ENCODE measurements at regions of chr1 and their contacts with region 1.

Region 1: DNA sequence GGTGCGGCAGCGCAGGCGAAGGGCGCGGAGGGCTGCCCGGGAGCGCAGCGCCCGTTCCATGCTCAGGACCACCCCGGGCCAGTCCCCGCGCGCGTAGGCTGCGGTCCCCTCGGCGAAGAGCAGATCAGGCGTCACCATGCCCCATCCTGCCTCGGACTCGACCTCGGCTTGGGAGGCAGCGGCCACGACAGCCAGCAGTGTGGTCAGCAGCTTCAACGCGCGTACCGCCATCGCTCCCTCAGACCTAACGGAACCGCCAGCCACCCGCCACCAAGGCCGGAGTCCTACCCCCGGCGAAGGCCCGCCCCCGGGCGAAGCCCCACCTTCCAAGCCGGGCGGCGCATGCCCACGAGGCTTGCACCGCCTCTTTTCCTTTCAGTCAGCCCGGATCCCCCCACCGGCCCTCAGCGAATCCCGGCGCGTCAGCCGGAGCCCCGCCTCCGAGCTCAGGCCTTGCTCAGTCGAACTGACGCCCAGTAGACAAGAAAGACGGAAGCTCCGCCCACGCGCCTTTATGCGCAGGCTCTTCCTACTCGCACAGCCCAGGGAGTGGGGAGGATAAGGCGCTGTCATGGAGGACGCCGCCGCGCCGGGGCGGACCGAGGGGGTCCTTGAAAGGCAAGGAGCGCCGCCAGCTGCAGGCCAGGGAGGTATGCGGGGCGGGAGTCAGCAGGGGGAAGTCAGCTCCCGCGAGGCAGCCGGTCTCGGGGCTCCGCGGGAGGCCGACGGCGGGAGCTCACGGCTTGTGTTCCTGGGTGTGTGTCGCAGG is at the starts of genes C1orf50 and P3H1:
- DNase-seq: peak; percentile 100
- H3K4me3 Mint-ChIP-seq: no peak within 1 kb of the TSS
- H3K27ac Mint-ChIP-seq: peak within 1 kb of the TSS; percentile 83
- H3K4me1 Mint-ChIP-seq: peaks cover 35% of the 10 kb centered on the region
- H3K27me3 Mint-ChIP-seq: no peaks in the 10 kb centered on the region
- total RNA-seq, gene C1orf50: 4.1 to 4.7 TPM
- total RNA-seq, gene P3H1: 26.4 to 28.6 TPM

Region 2: GRCh38 chr1:42392967-42393848 is 373.7 kb before region 1 on chr1:
- CTCF ChIA-PET with region 1: no interaction called
- intact Hi-C with region 1: no loop called
- DNase-seq: no peak
- H3K4me3 Mint-ChIP-seq: no peak overlapping the region
- H3K27ac Mint-ChIP-seq: no peak overlapping the region
- H3K4me1 Mint-ChIP-seq: peaks cover 10% of the 10 kb centered on the region
- H3K27me3 Mint-ChIP-seq: no peaks in the 10 kb centered on the region

Region 3: GRCh38 chr1:42456010-42456758 is 310.7 kb before region 1 on chr1 and contains the starts of genes PPCS and ZMYND12:
- CTCF ChIA-PET with region 1: no interaction called
- intact Hi-C with region 1: loop called (anchors 2 kb)
- DNase-seq: peak; percentile 94
- H3K4me3 Mint-ChIP-seq: peak within 1 kb of the TSS; percentile 95
- H3K27ac Mint-ChIP-seq: peak within 1 kb of the TSS; percentile 94
- H3K4me1 Mint-ChIP-seq: peaks cover 23% of the 10 kb centered on the region
- H3K27me3 Mint-ChIP-seq: no peaks in the 10 kb centered on the region
- total RNA-seq, gene PPCS: 47.4 to 49.6 TPM
- total RNA-seq, gene ZMYND12: 0.74 to 0.76 TPM

Region 4: DNA sequence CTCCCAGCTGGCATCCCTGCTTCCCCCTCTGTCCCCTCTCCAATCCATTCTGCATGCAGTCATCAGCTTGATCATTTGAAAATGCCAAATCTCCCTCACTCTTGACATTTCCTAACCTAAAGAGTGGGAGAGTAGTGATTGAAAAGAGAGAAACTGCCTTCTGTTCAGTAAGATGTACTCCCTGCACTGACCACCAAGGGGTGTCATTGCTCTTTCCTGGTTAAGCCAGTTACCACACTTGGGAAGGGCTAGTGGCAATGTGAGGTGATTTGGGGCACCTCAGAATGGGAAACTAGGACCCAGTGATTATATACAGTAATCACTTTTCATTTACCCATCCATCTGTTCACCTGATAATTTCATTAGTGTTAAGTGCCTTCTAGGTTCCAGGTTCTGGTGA is 10.9 kb after region 1 on chr1:
- CTCF ChIA-PET with region 1: interaction called, 23 read pairs
- intact Hi-C with region 1: no loop called
- DNase-seq: peak; percentile 61
- H3K4me3 Mint-ChIP-seq: no peak overlapping the region
- H3K27ac Mint-ChIP-seq: no peak overlapping the region
- H3K4me1 Mint-ChIP-seq: peaks cover 6% of the 10 kb centered on the region
- H3K27me3 Mint-ChIP-seq: no peaks in the 10 kb centered on the region

Region 5: DNA sequence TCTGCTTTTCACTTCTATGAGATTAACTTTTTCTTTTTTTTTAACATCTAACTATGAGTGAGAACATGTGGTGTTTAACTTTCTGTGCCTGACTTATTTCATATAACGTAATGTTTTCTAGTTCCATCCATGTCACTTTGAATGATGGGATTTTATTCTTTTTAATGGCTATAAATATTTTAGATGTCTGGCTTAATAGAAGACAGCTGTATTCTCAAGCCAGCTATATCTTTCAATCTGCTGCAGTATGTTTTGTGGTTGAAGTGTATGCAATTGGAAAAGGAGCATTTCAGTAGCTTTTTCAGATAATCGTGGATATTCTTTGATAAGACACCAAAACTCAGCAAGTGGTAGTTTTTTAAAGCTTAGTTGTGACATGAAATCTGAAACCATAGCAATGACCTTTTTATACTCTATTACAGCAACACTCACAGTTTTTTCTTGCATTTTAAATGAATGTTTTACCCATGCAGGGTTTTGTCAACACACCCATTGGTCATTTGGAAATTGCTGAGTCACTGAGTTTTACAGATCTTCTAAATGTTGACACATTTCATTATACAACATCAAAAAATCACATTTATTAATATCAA is 56.0 kb after region 1 on chr1:
- CTCF ChIA-PET with region 1: no interaction called
- intact Hi-C with region 1: no loop called
- DNase-seq: no peak
- H3K4me3 Mint-ChIP-seq: no peak overlapping the region
- H3K27ac Mint-ChIP-seq: no peak overlapping the region
- H3K4me1 Mint-ChIP-seq: peaks cover 16% of the 10 kb centered on the region
- H3K27me3 Mint-ChIP-seq: no peaks in the 10 kb centered on the region

Region 6: GRCh38 chr1:42846257-42847110 is 79.6 kb after region 1 on chr1 and contains the start of gene ZNF691:
- CTCF ChIA-PET with region 1: interaction called, 3 read pairs
- intact Hi-C with region 1: loop called (anchors 1 kb)
- DNase-seq: peak; percentile 95
- H3K4me3 Mint-ChIP-seq: peak within 1 kb of the TSS; percentile 82
- H3K27ac Mint-ChIP-seq: peak within 1 kb of the TSS; percentile 74
- H3K4me1 Mint-ChIP-seq: peaks cover 28% of the 10 kb centered on the region
- H3K27me3 Mint-ChIP-seq: no peaks in the 10 kb centered on the region
- total RNA-seq, gene ZNF691: 4.6 to 5.3 TPM

Region 7: GRCh38 chr1:43171876-43172526 is 405.1 kb after region 1 on chr1 and contains the starts of genes CFAP57 and EBNA1BP2:
- CTCF ChIA-PET with region 1: no interaction called
- intact Hi-C with region 1: loop called (anchors 5 kb)
- DNase-seq: peak; percentile 96
- H3K4me3 Mint-ChIP-seq: peak within 1 kb of the TSS; percentile 99
- H3K27ac Mint-ChIP-seq: peak within 1 kb of the TSS; percentile 90
- H3K4me1 Mint-ChIP-seq: peaks cover 39% of the 10 kb centered on the region
- H3K27me3 Mint-ChIP-seq: peaks cover 2% of the 10 kb centered on the region
- total RNA-seq, gene CFAP57: 0.12 to 0.14 TPM
- total RNA-seq, gene EBNA1BP2: 88.0 to 88.3 TPM